Head of caudate nucleus (tissue), 42 donors: ENCODE measurements at regions of chr20 and their contacts with region 1.

Region 1: GRCh38 chr20:41249406-41250281 is 67.9 kb downstream of the ZHX3 start:
- DNase-seq: peak in 38 of 42 donors; percentile 25 to 88 (median 60)

Region 2: GRCh38 chr20:41317536-41318270 is 68.1 kb after region 1 on chr20 and contains the start of gene ZHX3:
- intact Hi-C with region 1: loop called (anchors 5 kb)
- DNase-seq: peak; percentile 80 to 99 (median 97)

Region 3: GRCh38 chr20:41339507-41340326 is 90.1 kb after region 1 on chr20:
- intact Hi-C with region 1: loop called (anchors 5 kb)
- DNase-seq: peak; percentile 74 to 94 (median 86)